ENCODE measurements at regions of chr12 and their contacts with region 1.

Region 1: DNA sequence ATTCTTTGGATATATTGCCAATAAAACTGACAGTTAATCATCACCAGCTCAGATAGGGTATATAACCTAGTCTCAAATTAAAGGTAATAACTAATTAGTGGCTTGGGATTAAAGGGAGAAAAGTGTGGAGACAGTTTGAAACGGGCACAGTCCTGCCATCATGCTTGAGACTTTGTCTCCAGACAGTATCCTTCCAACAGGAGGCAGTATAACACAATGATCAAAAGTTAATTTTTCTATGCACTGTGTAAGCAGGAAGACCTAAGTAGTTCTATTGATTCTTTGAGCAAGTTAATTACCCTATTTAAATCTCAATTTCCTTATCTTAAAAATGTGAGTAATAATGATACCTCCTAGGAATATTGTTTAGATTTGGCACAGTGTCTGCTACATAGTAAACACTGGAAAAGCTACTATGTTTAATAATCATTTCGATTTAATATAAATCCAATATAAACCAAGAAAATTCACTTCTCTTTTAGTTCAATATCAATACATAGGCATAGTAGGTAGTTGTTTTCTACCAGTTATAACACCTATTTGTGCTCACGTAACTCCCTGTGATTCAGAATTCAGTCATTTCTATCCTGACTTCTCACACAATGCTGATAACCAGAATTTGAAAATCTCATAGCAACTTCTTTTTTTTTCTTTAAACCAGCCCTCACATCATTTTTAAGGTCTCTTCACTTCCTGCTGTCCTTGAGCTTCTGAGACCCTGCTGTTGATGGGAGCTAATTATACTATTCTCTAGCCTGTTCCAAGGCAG is 53.7 kb downstream of the GALNT4 start:
- DNase-seq: peak in 1 of 2 donors; percentile 82
- H3K4me3 ChIP-seq: no peak overlapping the region
- H3K27ac ChIP-seq: peak overlapping the region in 1 of 5 donors; percentile 42
- H3K4me1 ChIP-seq: peaks cover 0 to 11% (median 2%) of the 10 kb centered on the region in 4 donors
- H3K27me3 ChIP-seq: no peaks in the 10 kb centered on the region
- CTCF ChIP-seq: peak in 5 of 7 experiments; percentile 39 to 70 (median 55)
- EP300 ChIP-seq: no peak
- POLR2A ChIP-seq: no peak

Region 2: GRCh38 chr12:89529738-89530137 is 58.8 kb after region 1 on chr12:
- intact Hi-C with region 1: loop called (anchors 5 kb)
- DNase-seq: peak in 1 of 2 donors; percentile 80
- H3K4me3 ChIP-seq: no peak overlapping the region
- H3K27ac ChIP-seq: no peak overlapping the region
- H3K4me1 ChIP-seq: peaks cover 4 to 28% (median 12%) of the 10 kb centered on the region in 4 donors
- H3K27me3 ChIP-seq: no peaks in the 10 kb centered on the region
- CTCF ChIP-seq: peak in 5 of 7 experiments; percentile 38 to 77 (median 55)
- EP300 ChIP-seq: no peak
- POLR2A ChIP-seq: no peak

Region 3: GRCh38 chr12:89882050-89882449 is 411.1 kb after region 1 on chr12:
- intact Hi-C with region 1: no loop called
- DNase-seq: peak in 1 of 2 donors; percentile 34
- H3K4me3 ChIP-seq: no peak overlapping the region
- H3K27ac ChIP-seq: no peak overlapping the region
- H3K4me1 ChIP-seq: no peaks in the 10 kb centered on the region
- H3K27me3 ChIP-seq: no peaks in the 10 kb centered on the region
- CTCF ChIP-seq: no peak
- EP300 ChIP-seq: no peak
- POLR2A ChIP-seq: no peak